G401 (cell line): ENCODE measurements at regions of chr1 and their contacts with region 1.

Region 1: GRCh38 chr1:89129911-89130310 is 4.0 kb upstream of the GBP2 start:
- DNase-seq: no peak

Region 2: DNA sequence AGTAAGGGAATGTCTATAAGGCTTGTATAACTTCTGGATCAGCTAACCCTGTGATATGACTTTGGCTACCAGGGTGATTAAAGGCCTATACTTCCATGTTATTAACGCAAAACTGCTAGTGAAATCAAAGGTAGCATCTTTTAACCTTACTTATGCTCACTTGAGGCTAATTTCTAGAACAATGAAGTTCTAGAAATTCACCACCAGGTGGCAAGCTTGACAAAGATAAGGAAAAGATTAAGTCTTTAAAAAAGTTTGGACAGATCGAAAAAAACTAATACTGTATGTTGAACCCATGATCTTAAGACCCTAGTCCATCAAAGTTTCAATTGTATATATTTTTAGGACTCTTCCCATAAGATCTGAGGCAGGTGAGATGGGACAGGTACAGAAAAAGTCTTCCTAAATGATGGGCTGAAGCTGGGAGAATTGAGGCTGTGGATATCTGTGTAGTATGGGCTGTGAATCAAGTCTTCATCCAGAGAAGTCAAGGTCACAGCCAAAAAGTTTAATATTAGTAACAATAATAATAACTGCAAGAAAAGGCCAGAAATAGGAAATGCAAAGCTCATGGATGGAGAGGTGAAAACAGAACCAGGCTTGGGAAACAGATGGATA is 156.3 kb before region 1 on chr1:
- in situ Hi-C with region 1: no loop called
- DNase-seq: peak; percentile 24

Region 3: GRCh38 chr1:89190017-89190416 is 60.1 kb after region 1 on chr1:
- in situ Hi-C with region 1: loop called (anchors 5 kb)
- DNase-seq: no peak